ENCODE measurements at regions of chr5 and their contacts with region 1.

Region 1: DNA sequence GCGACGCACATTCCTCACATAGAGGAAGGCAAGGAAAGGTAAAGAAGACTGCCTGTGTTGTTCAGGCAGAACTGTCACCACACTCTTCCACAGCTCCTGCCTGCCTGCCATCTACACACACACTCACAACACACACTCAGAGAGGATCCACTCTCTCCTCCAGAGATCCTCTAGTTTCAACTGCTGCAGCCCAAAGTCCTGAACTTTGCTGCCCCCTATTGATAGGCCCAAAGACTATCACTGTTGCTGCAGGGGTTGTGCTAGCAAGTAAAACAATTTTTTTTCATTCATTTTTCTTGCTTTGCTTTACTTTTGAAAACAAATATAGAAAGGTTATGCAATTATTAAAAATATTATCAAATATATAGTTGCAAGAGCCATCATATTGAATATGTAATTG is 5.9 kb upstream of the CFAP90 start:
- DNase-seq: peak; percentile 65
- H3K4me3 ChIP-seq: no peak overlapping the region
- H3K27ac ChIP-seq: no peak overlapping the region
- H3K4me1 ChIP-seq: peaks cover 4 to 11% of the 10 kb centered on the region in 2 experiments; a peak in 2 of 4 replicates
- H3K27me3 ChIP-seq: no peaks in the 10 kb centered on the region; the same call in 1 of the 2 replicates
- CTCF ChIP-seq: peak; percentile 67
- EP300 ChIP-seq: no peak
- RAD21 ChIP-seq: peak; percentile 80

Region 2: GRCh38 chr5:7261049-7261448 is 595.8 kb before region 1 on chr5:
- CTCF ChIA-PET with region 1: interaction called, 10 read pairs
- POLR2A ChIA-PET with region 1: no interaction called
- DNase-seq: peak; percentile 10
- H3K4me3 ChIP-seq: no peak overlapping the region; a peak in 1 of 4 replicates
- H3K27ac ChIP-seq: no peak overlapping the region
- H3K4me1 ChIP-seq: no peaks in the 10 kb centered on the region
- H3K27me3 ChIP-seq: no peaks in the 10 kb centered on the region
- CTCF ChIP-seq: peak; percentile 66
- EP300 ChIP-seq: no peak
- RAD21 ChIP-seq: peak; percentile 66

Region 3: GRCh38 chr5:7815892-7816534 is 40.8 kb before region 1 on chr5:
- CTCF ChIA-PET with region 1: interaction called, 10 read pairs
- POLR2A ChIA-PET with region 1: no interaction called
- DNase-seq: peak; percentile 80
- H3K4me3 ChIP-seq: peak overlapping the region in 1 of 2 experiments; percentile 51; a peak in 1 of 4 replicates
- H3K27ac ChIP-seq: no peak overlapping the region
- H3K4me1 ChIP-seq: no peaks in the 10 kb centered on the region; a peak in 1 of 4 replicates
- H3K27me3 ChIP-seq: peaks cover 58% of the 10 kb centered on the region; the same call in 1 of the 2 replicates
- CTCF ChIP-seq: peak; percentile 75
- EP300 ChIP-seq: no peak
- RAD21 ChIP-seq: peak; percentile 65

Region 4: DNA sequence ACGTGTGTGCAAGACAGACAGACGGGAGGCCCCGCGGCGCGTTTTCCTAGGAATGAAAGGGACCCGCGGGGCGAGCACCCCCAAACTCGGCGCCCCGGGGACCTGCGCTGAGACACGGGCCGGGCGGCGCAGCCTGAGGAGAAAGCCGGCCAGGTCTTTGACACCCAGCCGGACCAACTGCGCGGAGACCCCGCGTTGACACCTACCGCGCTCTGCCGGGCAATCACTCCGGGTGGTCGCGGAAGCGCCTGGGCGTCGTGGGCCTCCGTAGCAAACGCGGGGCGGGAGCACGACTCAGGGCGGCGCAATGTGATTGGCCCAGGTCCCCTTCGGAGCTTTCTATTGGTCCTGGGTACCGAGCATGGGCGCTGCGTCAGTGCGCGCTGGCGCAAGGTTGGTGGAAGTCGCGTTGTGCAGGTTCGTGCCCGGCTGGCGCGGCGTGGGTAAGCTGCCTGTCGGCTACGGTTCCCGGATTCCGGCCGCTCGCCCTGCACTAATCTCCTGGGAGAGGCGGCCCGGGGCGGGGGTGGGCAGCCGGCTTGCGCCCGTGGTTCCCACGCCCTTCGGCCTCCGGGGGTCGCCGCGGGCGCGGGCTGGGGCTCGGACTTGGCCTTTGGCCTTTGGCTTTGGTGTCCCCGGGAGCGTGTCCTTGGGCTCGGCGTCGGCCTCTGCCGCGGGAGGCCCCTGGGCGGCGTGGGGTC is 12.1 kb after region 1 on chr5 and contains the starts of genes FASTKD3 and MTRR:
- CTCF ChIA-PET with region 1: interaction called, 34 read pairs
- POLR2A ChIA-PET with region 1: no interaction called
- DNase-seq: peak; percentile 97
- H3K4me3 ChIP-seq: peak within 1 kb of the TSS; percentile 84 to 96
- H3K27ac ChIP-seq: peak within 1 kb of the TSS; percentile 47 to 55; a peak in 2 of 4 replicates
- H3K4me1 ChIP-seq: peaks cover 0 to 12% of the 10 kb centered on the region in 2 experiments; a peak in 2 of 4 replicates
- H3K27me3 ChIP-seq: no peaks in the 10 kb centered on the region
- CTCF ChIP-seq: no peak
- EP300 ChIP-seq: no peak
- RAD21 ChIP-seq: no peak
- polyA plus RNA-seq, gene FASTKD3: 5.4 and 8.5 TPM in 2 replicates
- polyA plus RNA-seq, gene MTRR: 18.4 and 23.5 TPM in 2 replicates

Region 5: GRCh38 chr5:7886849-7887475 is 30.1 kb after region 1 on chr5:
- CTCF ChIA-PET with region 1: interaction called, 10 read pairs
- POLR2A ChIA-PET with region 1: no interaction called
- DNase-seq: peak; percentile 27
- H3K4me3 ChIP-seq: no peak overlapping the region
- H3K27ac ChIP-seq: no peak overlapping the region
- H3K4me1 ChIP-seq: no peaks in the 10 kb centered on the region
- H3K27me3 ChIP-seq: no peaks in the 10 kb centered on the region
- CTCF ChIP-seq: peak; percentile 72
- EP300 ChIP-seq: no peak
- RAD21 ChIP-seq: peak; percentile 56

Region 6: DNA sequence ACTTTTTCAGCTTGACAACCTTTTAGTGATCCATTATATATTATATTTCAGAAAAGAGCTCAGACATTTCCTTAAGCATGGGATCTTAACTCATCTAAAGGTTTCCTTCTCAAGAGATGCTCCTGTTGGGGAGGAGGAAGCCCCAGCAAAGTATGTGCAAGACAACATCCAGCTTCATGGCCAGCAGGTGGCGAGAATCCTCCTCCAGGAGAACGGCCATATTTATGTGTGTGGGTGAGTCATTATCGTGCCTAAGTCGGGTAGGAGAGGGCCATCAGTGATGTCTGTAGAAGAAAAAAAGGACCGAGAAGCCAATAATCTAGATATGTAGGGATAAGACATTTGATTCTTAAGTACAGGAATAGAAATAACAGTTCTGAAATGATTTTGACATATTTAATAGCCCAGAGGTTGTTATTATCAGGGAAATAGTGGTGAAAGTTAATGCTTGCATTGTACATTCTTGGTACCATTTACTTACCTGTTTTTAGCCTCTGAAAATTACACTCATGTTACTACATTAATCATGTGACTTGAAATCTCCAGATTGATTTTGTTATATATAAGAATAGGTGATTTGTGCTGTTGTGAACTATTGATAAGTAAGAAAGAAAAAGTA is 40.3 kb after region 1 on chr5:
- CTCF ChIA-PET with region 1: no interaction called
- POLR2A ChIA-PET with region 1: no interaction called
- DNase-seq: peak; percentile 27
- H3K4me3 ChIP-seq: no peak overlapping the region
- H3K27ac ChIP-seq: no peak overlapping the region
- H3K4me1 ChIP-seq: no peaks in the 10 kb centered on the region
- H3K27me3 ChIP-seq: no peaks in the 10 kb centered on the region
- CTCF ChIP-seq: peak; percentile 61
- EP300 ChIP-seq: no peak
- RAD21 ChIP-seq: peak; percentile 25

Region 7: DNA sequence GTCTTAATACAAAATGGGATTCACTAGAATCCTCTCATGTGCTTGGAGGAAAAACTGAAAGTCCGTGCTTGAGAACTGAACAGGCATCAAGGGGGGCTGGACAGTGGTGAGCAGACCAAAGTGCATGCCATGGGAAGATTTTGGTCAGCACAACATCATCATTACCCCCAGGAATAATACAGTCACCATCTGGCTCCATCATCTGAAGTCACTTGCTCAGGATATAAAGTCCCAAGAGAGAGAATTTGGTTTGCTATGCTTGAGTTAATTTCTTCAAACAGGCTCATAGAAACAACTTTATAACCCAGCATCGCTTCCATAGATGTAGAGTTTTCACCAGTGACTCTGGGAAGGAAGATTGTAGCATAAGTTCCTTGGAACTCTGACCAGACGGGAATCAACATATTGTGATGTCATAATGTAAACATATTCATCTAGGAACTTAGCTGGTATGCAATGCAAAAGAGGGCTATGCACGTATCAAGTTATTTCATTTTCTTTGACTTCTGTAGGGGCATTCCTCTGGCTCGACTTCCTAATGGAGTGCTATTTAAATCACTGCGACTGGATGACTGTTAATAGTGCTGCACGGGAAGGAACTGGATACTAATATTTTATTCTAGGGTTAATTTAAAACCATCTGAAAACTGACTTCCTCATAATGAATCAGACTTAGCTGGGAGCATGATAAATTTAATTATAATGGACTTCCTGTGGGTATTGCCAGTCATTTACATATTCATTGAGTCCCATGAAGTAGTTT is 157.3 kb after region 1 on chr5:
- CTCF ChIA-PET with region 1: no interaction called
- POLR2A ChIA-PET with region 1: no interaction called
- DNase-seq: no peak
- H3K4me3 ChIP-seq: no peak overlapping the region
- H3K27ac ChIP-seq: no peak overlapping the region
- H3K4me1 ChIP-seq: no peaks in the 10 kb centered on the region
- H3K27me3 ChIP-seq: no peaks in the 10 kb centered on the region
- CTCF ChIP-seq: no peak
- EP300 ChIP-seq: no peak
- RAD21 ChIP-seq: no peak